Psoas muscle (tissue), 8 donors: ENCODE measurements at regions of chr2 and their contacts with region 1.

Region 1: GRCh38 chr2:172972005-172972619 is 103.5 kb upstream of the MAP3K20 start:
- DNase-seq: peak in 1 of 2 donors; percentile 63
- ATAC-seq: peak; percentile 61 to 86 (median 72)
- H3K4me3 ChIP-seq: no peak overlapping the region
- H3K27ac ChIP-seq: no peak overlapping the region
- H3K4me1 ChIP-seq: peaks cover 9% of the 10 kb centered on the region
- H3K27me3 ChIP-seq: no peaks in the 10 kb centered on the region
- CTCF ChIP-seq: peak; percentile 76

Region 2: DNA sequence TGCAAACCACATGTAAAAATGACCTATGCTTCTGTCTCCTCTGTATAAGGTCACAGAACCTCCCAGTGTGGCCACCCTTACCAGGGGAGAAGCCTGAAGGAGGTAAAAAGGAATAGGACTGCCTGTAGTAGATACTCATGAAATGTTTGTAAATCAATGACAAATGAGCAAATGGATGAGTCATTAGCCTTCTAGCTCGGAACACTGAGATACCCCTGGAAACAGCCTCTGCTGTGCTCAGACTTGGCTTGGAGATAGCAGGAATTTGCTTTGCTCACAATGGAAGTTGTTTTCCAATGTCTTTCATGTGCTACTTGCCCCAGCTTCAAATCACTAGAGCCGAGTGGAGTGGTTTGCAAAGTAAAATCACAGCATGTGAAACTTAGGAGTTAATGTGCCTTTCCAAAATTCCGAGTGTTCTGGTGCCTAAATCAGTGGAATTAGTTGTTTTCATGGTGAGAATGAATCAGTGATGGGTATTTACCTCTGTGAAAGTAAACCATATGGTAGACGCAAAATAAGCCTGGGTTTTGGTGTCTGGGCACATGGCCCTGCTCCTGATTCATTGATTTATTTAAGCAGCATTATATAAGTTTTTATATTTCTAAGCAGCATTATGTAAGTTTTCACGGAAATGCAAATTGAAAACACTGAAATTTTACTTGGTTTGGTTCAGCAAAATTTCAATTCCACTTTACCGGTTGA is 50.4 kb before region 1 on chr2:
- intact Hi-C with region 1: no loop called
- DNase-seq: no peak
- ATAC-seq: no peak
- H3K4me3 ChIP-seq: no peak overlapping the region
- H3K27ac ChIP-seq: no peak overlapping the region
- H3K4me1 ChIP-seq: peaks cover 12% of the 10 kb centered on the region
- H3K27me3 ChIP-seq: no peaks in the 10 kb centered on the region
- CTCF ChIP-seq: no peak

Region 3: DNA sequence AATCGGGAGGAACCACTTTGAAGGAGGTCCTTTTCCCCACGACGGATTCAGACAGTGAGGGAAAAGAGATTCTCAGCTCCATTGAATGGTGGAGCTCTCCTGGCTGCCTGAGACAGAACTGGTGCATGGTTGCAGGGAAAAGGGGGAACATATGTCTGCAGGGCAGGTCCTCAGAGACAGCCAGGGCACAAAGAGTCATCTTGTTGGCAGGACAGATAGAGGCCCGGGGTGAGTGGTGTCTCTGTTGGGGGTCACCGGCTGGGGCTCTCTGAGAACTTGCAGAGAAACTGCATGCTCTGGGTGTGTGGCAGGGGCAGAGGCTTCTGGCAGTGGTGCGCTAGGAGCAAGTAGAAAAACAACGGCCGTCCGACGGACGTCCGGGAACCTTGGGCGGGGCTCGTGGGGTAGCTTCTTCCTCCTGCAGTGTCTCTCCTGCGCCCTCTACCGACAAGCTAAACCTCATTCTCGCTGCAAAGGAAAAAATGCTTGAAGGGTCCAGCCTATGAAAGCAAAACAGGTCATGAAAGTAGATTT is 476.9 kb after region 1 on chr2:
- intact Hi-C with region 1: loop called in 1 of 2 experiments (anchors 5 kb)
- DNase-seq: peak; percentile 68 to 84
- ATAC-seq: peak; percentile 81 to 94 (median 90)
- H3K4me3 ChIP-seq: peak overlapping the region; percentile 48
- H3K27ac ChIP-seq: peak overlapping the region; percentile 63
- H3K4me1 ChIP-seq: no peaks in the 10 kb centered on the region
- H3K27me3 ChIP-seq: no peaks in the 10 kb centered on the region
- CTCF ChIP-seq: peak; percentile 77